Testis (tissue), 5 donors: ENCODE measurements at regions of chr10 and their contacts with region 1.

Region 1: DNA sequence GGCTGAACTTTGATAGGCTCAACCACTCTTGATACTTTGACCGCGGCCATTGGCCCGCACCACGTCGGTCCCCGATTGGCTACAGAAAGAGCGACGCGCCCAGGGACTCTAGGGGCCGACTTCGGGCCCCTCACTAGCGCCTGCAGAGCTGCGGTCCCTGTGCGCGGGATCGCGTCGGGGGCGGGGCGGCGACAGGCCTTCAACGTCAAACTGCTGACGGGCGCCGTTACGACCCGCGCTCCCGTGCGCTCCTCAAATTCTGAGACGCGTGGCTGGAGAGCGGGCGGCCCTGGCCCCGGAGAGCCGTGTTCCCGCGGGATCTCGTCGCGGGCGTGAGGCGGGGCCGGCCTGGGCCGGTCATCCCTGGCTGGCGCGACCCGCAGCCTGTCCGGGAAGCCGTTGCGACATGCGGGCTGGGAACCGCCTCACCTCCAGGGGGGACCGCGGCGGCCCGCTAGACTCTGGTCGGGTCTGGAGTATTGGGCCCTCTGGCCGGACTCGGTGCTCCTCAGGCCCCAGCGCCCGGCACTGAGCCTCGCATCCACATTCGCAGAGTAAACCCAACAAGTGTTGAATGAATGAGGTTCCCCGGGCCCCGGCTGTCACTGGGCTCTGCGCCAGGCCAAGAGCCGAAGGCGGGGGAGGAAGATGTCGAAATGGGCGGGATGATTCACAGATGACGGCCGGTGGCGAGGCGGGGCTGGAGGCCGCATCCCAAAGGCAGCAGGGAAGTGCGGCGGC is 644 bp upstream of the SLC25A28 start:
- DNase-seq: peak; percentile 91
- H3K4me3 ChIP-seq: peak overlapping the region; percentile 67 to 86
- H3K27ac ChIP-seq: peak overlapping the region; percentile 94 to 96
- H3K4me1 ChIP-seq: peaks cover 23% of the 10 kb centered on the region
- H3K27me3 ChIP-seq: no peaks in the 10 kb centered on the region
- CTCF ChIP-seq: peak in 1 of 3 experiments; percentile 23
- POLR2A ChIP-seq: peak; percentile 46

Region 2: DNA sequence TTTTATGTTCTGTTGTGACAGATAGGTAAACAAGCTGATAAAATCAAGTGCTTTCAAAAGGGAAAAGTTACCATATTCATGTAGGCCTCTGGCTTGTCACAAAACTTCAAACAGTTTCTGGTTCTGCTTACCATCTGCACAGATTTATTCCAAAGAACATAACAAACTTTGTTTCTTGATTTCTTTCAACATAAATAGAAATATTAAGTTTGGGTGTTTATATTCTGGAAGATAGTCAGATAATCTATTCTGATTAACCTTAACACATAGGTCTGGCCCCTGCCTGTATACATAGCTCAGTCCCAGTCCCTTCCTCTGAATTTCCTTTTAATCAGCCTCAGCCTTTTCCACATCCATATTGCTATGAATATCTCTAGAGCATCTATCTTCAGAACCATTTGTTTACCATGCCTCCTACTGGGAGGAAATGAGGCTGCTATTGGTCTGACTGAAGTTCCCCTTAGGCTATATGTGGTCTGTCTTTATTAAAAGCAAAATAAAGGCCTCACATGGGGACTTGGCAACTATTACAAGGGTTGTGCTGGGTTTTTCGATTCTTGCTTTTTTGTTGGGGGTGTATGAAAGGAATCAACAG is 704.3 kb before region 1 on chr10:
- intact Hi-C with region 1: no loop called
- DNase-seq: no peak
- H3K4me3 ChIP-seq: no peak overlapping the region
- H3K27ac ChIP-seq: no peak overlapping the region
- H3K4me1 ChIP-seq: no peaks in the 10 kb centered on the region
- H3K27me3 ChIP-seq: no peaks in the 10 kb centered on the region
- CTCF ChIP-seq: no peak
- POLR2A ChIP-seq: no peak

Region 3: DNA sequence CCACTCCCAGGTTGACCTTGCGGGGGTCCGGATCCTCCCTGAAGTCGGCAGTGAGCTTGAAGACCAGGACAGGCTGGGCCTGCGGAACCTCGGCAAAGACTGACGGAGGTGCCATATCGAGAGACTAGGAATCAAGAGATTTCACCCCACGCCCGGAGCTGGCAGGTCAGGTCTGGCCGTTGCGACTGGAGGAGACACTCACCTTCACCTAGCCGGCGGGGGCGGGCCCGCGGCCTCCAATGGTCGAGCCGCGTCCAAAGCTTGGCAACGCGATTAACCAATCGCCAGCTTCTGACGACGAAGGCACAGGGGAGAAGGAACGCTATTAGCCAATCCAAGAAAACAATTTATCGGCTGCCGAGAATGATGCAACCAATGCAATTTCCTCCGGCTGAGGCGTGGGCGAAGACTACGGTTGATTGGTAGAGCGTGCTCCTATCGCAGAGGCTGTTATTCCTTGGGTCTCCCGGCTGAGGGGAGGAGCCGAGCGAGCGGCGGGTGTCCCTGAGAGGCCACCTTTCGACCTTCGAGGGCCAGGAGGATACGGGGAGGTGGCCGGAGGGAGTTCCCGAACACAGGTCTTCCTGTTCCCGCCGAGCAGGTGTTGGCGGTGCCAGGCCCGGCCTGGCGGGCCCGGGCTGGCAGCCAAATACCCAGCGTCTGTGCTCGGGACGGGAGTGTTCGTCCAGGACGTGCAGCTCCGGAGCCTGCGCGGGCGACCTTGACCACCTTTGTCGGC is 190.3 kb before region 1 on chr10 and contains the start of gene GOT1:
- intact Hi-C with region 1: loop called (anchors 10 kb)
- DNase-seq: peak; percentile 97
- H3K4me3 ChIP-seq: peak within 1 kb of the TSS; percentile 82 to 95
- H3K27ac ChIP-seq: peak within 1 kb of the TSS; percentile 92 to 93
- H3K4me1 ChIP-seq: peaks cover 10% of the 10 kb centered on the region
- H3K27me3 ChIP-seq: no peaks in the 10 kb centered on the region
- CTCF ChIP-seq: peak in 1 of 3 experiments; percentile 20
- POLR2A ChIP-seq: no peak
- total RNA-seq, gene GOT1: 34.3 to 38.3 TPM

Region 4: DNA sequence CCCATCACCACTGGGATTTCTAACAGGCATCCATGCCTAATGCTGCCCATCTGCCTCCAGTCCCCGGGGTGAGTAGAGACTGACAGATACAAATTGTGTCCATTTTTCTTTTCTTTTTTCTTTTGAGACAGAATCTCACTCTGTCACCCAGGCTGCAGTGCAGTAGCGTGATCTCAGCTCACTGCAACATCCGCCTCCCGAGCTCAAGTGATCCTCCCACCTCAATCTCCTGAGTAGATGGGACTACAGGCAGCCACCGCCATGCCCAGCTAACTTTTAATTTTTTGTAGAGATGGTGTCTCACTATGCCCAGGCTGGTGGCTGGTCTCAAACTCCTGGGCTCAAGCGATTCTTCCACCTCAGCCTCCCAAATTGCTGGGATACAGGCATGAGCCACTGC is 468.4 kb after region 1 on chr10:
- intact Hi-C with region 1: no loop called
- DNase-seq: no peak
- H3K4me3 ChIP-seq: no peak overlapping the region
- H3K27ac ChIP-seq: no peak overlapping the region
- H3K4me1 ChIP-seq: no peaks in the 10 kb centered on the region
- H3K27me3 ChIP-seq: no peaks in the 10 kb centered on the region
- CTCF ChIP-seq: no peak
- POLR2A ChIP-seq: no peak